ENCODE measurements at regions of chrX and their contacts with region 1.

Region 1: GRCh38 chrX:57286507-57287251 is at the start of gene FAAH2:
- DNase-seq: peak; percentile 83
- H3K4me3 Mint-ChIP-seq: peak within 1 kb of the TSS; percentile 92
- H3K27ac Mint-ChIP-seq: peak within 1 kb of the TSS; percentile 95
- H3K4me1 Mint-ChIP-seq: peaks cover 29% of the 10 kb centered on the region
- H3K27me3 Mint-ChIP-seq: no peaks in the 10 kb centered on the region
- total RNA-seq, gene FAAH2: 9.6 to 12.0 TPM

Region 2: GRCh38 chrX:56744996-56745395 is 541.7 kb before region 1 on chrX:
- CTCF ChIA-PET with region 1: no interaction called
- intact Hi-C with region 1: loop called (anchors 10 kb)
- DNase-seq: no peak
- H3K4me3 Mint-ChIP-seq: no peak overlapping the region
- H3K27ac Mint-ChIP-seq: peak overlapping the region; percentile 44
- H3K4me1 Mint-ChIP-seq: peaks cover 42% of the 10 kb centered on the region
- H3K27me3 Mint-ChIP-seq: no peaks in the 10 kb centered on the region

Region 3: GRCh38 chrX:56995271-56995994 is 291.2 kb before region 1 on chrX and contains the start of gene SPIN3:
- CTCF ChIA-PET with region 1: no interaction called
- intact Hi-C with region 1: loop called (anchors 1 kb)
- DNase-seq: peak; percentile 67
- H3K4me3 Mint-ChIP-seq: peak within 1 kb of the TSS; percentile 86
- H3K27ac Mint-ChIP-seq: peak within 1 kb of the TSS; percentile 92
- H3K4me1 Mint-ChIP-seq: peaks cover 37% of the 10 kb centered on the region
- H3K27me3 Mint-ChIP-seq: no peaks in the 10 kb centered on the region
- total RNA-seq, gene SPIN3: 8.6 to 10.3 TPM

Region 4: DNA sequence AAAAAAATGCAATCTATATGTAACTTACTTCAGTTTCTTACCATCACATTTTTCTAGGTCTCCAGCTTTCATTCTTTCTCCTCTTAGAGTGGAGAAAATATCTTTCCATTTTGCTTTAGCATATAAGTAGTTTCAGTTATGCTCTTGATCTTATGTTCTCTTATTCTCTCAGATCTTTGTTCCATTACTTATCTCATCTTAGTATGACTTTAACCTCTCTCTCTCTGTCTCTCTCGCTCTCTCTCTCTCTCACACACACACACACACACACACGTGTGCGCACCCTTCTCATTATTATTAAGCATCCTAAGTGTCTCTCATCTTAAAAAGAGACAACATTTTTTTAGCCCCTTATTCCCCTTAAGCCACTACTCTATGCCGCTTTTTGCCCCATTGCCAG is 92.6 kb after region 1 on chrX:
- CTCF ChIA-PET with region 1: no interaction called
- intact Hi-C with region 1: loop called (anchors 1 kb)
- DNase-seq: peak; percentile 5
- H3K4me3 Mint-ChIP-seq: no peak overlapping the region
- H3K27ac Mint-ChIP-seq: peak overlapping the region; percentile 69
- H3K4me1 Mint-ChIP-seq: peaks cover 8% of the 10 kb centered on the region
- H3K27me3 Mint-ChIP-seq: no peaks in the 10 kb centered on the region

Region 5: DNA sequence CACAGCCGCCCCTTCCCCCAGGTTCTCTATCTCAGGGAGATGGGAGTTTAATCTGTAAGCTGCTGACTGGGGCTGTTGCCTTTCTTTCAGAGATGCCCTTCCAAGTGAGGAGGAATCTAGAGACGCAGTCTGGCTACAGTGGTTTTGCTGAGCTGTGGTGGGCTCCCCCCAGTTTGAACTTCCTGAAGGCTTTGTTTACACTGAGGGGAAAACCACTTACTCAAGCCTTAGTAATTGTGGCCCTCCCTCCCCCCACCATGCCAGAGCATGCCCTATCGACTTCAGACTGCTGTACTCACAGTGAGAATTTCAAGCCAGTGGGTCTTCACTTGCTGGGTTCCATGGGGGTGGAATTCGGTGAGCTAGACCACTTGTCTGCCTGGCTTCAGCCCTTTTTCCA is 131.1 kb after region 1 on chrX:
- CTCF ChIA-PET with region 1: no interaction called
- intact Hi-C with region 1: no loop called
- DNase-seq: no peak
- H3K4me3 Mint-ChIP-seq: no peak overlapping the region
- H3K27ac Mint-ChIP-seq: no peak overlapping the region
- H3K4me1 Mint-ChIP-seq: no peaks in the 10 kb centered on the region
- H3K27me3 Mint-ChIP-seq: no peaks in the 10 kb centered on the region

Region 6: GRCh38 chrX:57595381-57595811 is 308.7 kb after region 1 on chrX:
- CTCF ChIA-PET with region 1: no interaction called
- intact Hi-C with region 1: loop called (anchors 1 kb)
- DNase-seq: no peak
- H3K4me3 Mint-ChIP-seq: peak overlapping the region; percentile 46
- H3K27ac Mint-ChIP-seq: peak overlapping the region; percentile 71
- H3K4me1 Mint-ChIP-seq: peaks cover 24% of the 10 kb centered on the region
- H3K27me3 Mint-ChIP-seq: no peaks in the 10 kb centered on the region

Measured in activated naive CD4-positive, alpha-beta T cell treated with anti-CD3 and anti-CD28 coated beads for 36 hours (primary cell).